ENCODE measurements at regions of chr1 and their contacts with region 1.

Region 1: GRCh38 chr1:228734881-228735801 is at the start of gene RHOU:
- DNase-seq: peak; percentile 89
- H3K4me3 ChIP-seq: peak within 1 kb of the TSS; percentile 94 to 96 (median 96)
- H3K27ac ChIP-seq: peak within 1 kb of the TSS; percentile 87 to 97 (median 92)
- H3K4me1 ChIP-seq: peaks cover 0 to 24% (median 12%) of the 10 kb centered on the region in 4 donors
- H3K27me3 ChIP-seq: no peaks in the 10 kb centered on the region
- CTCF ChIP-seq: peak in 3 of 4 experiments; percentile 7 to 91 (median 52)
- EP300 ChIP-seq: no peak
- POLR2A ChIP-seq: peak; percentile 47 to 48
- total RNA-seq, gene RHOU: 9.7 to 24.6 (median 15.1) TPM

Region 2: DNA sequence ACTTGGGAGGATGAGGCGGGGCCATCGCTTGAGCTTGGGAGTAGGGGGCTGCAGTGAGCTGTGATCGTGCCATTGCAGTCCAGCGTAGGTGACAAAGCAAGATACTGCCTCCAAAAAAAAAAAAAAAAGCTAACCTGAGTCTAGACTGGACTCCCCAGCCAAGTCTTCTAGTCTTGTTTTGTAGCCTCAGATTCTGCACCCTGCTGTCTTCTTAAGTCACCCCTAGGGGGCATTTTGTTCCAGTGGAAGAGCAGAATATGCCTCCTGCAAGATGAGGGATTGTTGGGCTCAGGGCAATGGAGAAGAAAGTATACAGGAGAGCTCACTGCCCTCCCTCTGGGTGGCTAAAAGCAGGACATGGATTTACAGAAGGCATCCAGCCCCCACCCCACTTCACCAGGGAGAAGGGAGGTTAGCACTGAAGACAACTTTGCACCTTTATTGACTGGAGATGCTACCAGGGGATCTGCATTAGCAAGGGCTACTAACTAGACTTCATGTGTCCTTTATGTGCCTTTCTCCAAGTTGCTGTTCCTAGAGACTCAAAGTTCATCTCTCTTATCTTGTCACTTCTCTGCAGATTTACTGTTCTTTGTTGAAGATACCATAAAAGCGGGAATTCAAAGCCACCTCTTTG is 263.3 kb before region 1 on chr1:
- intact Hi-C with region 1: no loop called
- DNase-seq: no peak
- H3K4me3 ChIP-seq: no peak overlapping the region
- H3K27ac ChIP-seq: no peak overlapping the region
- H3K4me1 ChIP-seq: no peaks in the 10 kb centered on the region
- H3K27me3 ChIP-seq: peaks cover 15 to 66% (median 43%) of the 10 kb centered on the region in 3 donors
- CTCF ChIP-seq: peak in 1 of 4 experiments; percentile 12
- EP300 ChIP-seq: no peak
- POLR2A ChIP-seq: no peak

Region 3: DNA sequence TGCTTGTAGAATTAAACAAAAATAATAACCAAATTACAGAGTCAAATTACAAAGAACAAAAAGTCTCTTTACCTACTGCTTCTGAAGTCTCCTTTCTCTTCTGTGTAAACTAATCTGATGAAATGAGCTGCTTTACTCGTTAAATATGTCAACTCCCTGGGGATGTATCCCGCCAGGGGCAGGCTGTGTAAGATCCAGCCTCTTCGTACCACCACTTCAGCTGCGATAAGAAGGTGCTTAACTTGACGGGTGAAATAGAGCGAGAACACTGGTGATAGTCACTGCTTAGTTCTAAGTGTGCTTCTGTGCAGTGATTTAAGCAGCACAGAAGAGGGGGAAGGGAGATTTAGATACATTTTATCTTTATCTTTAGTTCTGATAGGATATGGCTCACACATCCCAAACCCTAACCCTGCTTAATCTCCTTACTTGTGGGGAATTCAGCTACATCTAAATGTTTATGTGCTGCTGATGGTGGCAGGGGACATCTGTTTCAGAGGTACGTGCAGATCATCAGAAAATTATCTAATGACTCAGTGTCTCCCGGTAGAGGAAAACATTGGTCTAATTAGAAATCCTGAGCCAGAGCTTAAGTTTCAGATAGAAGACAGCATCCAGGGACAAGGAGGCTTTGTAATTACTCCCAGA is 46.1 kb after region 1 on chr1:
- intact Hi-C with region 1: no loop called
- DNase-seq: no peak
- H3K4me3 ChIP-seq: no peak overlapping the region
- H3K27ac ChIP-seq: no peak overlapping the region
- H3K4me1 ChIP-seq: peaks cover 0 to 9% (median 0%) of the 10 kb centered on the region in 4 donors
- H3K27me3 ChIP-seq: no peaks in the 10 kb centered on the region
- CTCF ChIP-seq: no peak
- EP300 ChIP-seq: no peak
- POLR2A ChIP-seq: no peak

Region 4: GRCh38 chr1:228833911-228834688 is 99.0 kb after region 1 on chr1:
- intact Hi-C with region 1: loop called (anchors 2 kb)
- DNase-seq: no peak
- H3K4me3 ChIP-seq: no peak overlapping the region
- H3K27ac ChIP-seq: no peak overlapping the region
- H3K4me1 ChIP-seq: peaks cover 0 to 42% (median 32%) of the 10 kb centered on the region in 4 donors
- H3K27me3 ChIP-seq: no peaks in the 10 kb centered on the region
- CTCF ChIP-seq: no peak
- EP300 ChIP-seq: no peak
- POLR2A ChIP-seq: no peak

Region 5: GRCh38 chr1:229003233-229004031 is 268.3 kb after region 1 on chr1:
- intact Hi-C with region 1: loop called (anchors 10 kb)
- DNase-seq: peak; percentile 92
- H3K4me3 ChIP-seq: no peak overlapping the region
- H3K27ac ChIP-seq: peak overlapping the region in 3 of 4 donors; percentile 57 to 70 (median 61)
- H3K4me1 ChIP-seq: peaks cover 0 to 16% (median 10%) of the 10 kb centered on the region in 4 donors
- H3K27me3 ChIP-seq: no peaks in the 10 kb centered on the region
- CTCF ChIP-seq: no peak
- EP300 ChIP-seq: no peak
- POLR2A ChIP-seq: no peak

Region 6: GRCh38 chr1:229117664-229118300 is 382.6 kb after region 1 on chr1:
- intact Hi-C with region 1: loop called (anchors 2 kb)
- DNase-seq: peak; percentile 94
- H3K4me3 ChIP-seq: no peak overlapping the region
- H3K27ac ChIP-seq: peak overlapping the region; percentile 78 to 86 (median 83)
- H3K4me1 ChIP-seq: peaks cover 0 to 79% (median 44%) of the 10 kb centered on the region in 4 donors
- H3K27me3 ChIP-seq: no peaks in the 10 kb centered on the region
- CTCF ChIP-seq: no peak
- EP300 ChIP-seq: peak in 2 of 4 donors; percentile 60 to 70
- POLR2A ChIP-seq: no peak

Region 7: DNA sequence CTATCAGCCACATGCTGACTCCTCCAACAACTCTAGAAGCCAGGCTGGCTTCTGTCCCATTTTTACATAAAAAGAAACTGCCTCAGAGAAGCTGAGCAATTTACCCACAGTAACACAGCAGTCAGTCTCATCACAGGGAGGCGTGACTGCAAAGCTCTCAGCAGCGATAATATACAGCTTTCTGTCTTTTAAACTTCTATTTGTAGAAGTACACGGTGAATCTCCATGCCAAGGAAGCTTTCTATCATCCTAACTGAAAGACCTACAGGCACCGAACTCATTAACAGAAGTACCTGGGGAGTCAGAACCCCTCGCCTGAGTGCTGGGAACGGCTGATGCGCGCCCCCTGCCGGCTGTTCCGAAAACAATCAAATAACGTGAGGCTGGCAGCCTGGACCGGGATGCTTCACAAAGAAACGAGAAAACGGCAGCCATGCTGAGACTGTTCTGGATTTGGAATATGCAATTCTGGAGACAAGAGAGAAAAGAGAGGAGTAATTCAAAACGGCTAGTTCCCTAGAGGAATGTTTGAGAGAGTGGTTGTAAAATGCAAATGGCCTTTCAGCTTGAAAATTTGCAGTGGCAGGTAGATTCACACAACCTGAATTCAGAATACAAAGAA is 492.3 kb after region 1 on chr1:
- intact Hi-C with region 1: loop called (anchors 1 kb)
- DNase-seq: peak; percentile 92
- H3K4me3 ChIP-seq: no peak overlapping the region
- H3K27ac ChIP-seq: no peak overlapping the region
- H3K4me1 ChIP-seq: peaks cover 0 to 47% (median 22%) of the 10 kb centered on the region in 4 donors
- H3K27me3 ChIP-seq: no peaks in the 10 kb centered on the region
- CTCF ChIP-seq: peak; percentile 71 to 83 (median 79)
- EP300 ChIP-seq: peak in 1 of 4 donors; percentile 18
- POLR2A ChIP-seq: no peak

Region 8: GRCh38 chr1:229272164-229273158 is 537.3 kb after region 1 on chr1:
- intact Hi-C with region 1: no loop called
- DNase-seq: no peak
- H3K4me3 ChIP-seq: peak overlapping the region; percentile 49 to 93 (median 74)
- H3K27ac ChIP-seq: peak overlapping the region; percentile 82 to 89 (median 85)
- H3K4me1 ChIP-seq: peaks cover 0 to 47% (median 47%) of the 10 kb centered on the region in 4 donors
- H3K27me3 ChIP-seq: no peaks in the 10 kb centered on the region
- CTCF ChIP-seq: no peak
- EP300 ChIP-seq: no peak
- POLR2A ChIP-seq: no peak

Region 9: GRCh38 chr1:229363723-229364122 is 628.6 kb after region 1 on chr1:
- intact Hi-C with region 1: no loop called
- DNase-seq: no peak
- H3K4me3 ChIP-seq: no peak overlapping the region
- H3K27ac ChIP-seq: no peak overlapping the region
- H3K4me1 ChIP-seq: no peaks in the 10 kb centered on the region
- H3K27me3 ChIP-seq: peaks cover 0 to 16% (median 13%) of the 10 kb centered on the region in 3 donors
- CTCF ChIP-seq: no peak
- EP300 ChIP-seq: no peak
- POLR2A ChIP-seq: no peak